Left cardiac atrium (tissue), 4 donors: ENCODE measurements at regions of chr6 and their contacts with region 1.

Region 1: GRCh38 chr6:169751242-169752073 is at the starts of genes DYNLT2 and ERMARD:
- DNase-seq: peak; percentile 95
- ATAC-seq: peak; percentile 98 to 99
- total RNA-seq, gene DYNLT2: 0.59 to 1.1 TPM
- total RNA-seq, gene ERMARD: 10.5 to 11.3 TPM

Region 2: GRCh38 chr6:168823397-168824212 is 927.9 kb before region 1 on chr6:
- intact Hi-C with region 1: no loop called
- DNase-seq: no peak
- ATAC-seq: peak in 1 of 2 donors; percentile 38

Region 3: DNA sequence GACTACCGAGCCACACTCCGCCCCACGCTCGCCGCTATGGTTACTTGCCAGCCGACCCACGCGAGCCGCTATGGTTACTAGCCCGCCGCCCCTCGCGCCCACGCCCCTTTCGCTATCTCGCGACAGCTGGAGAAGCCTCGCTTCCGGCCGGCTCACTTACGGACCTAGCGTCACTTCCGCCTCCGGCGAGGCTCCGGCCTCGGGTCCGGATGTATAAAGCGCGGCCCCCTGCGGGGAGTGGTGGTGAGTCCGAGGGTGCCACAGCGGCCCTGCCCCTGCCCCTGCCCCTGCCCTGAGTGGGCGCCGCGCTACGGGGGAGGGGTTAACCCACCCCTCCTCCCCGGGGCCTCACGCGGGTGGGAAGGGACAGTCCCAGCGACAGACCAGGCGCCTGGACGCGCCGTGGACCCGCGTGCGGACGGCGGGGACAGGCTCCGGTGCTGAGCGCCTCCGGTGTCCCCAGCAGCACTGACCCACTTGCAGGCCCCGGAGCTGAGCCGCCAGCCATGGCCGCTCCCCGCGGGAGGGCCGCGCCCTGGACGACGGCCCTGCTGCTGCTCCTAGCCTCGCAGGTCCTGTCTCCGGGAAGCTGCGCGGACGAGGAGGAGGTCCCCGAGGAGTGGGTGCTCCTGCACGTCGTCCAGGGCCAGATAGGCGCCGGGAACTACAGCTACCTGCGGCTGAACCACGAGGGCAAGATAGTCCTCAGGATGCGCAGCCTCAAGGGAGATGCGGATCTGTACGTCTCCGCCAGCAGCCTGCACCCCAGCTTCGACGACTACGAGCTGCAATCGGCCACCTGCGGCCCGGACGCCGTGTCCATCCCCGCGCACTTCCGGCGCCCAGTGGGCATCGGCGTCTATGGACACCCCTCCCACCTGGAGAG is 49.3 kb before region 1 on chr6 and contains the starts of genes C6orf120 and WDR27:
- intact Hi-C with region 1: loop called in 1 of 2 experiments (anchors 10 kb)
- DNase-seq: peak; percentile 99
- ATAC-seq: peak; percentile 97 to 98
- total RNA-seq, gene C6orf120: 17.8 to 18.6 TPM
- total RNA-seq, gene WDR27: 12.3 to 12.9 TPM

Region 4: GRCh38 chr6:169724494-169725124 is 26.8 kb before region 1 on chr6 and contains the start of gene PHF10:
- intact Hi-C with region 1: loop called in 1 of 2 experiments (anchors 2 kb)
- DNase-seq: peak; percentile 54
- ATAC-seq: peak; percentile 64 to 70
- total RNA-seq, gene PHF10: 49.7 to 59.0 TPM

Region 5: GRCh38 chr6:170554013-170554795 is 802.7 kb after region 1 on chr6 and contains the start of gene TBP:
- intact Hi-C with region 1: loop called in 1 of 2 experiments (anchors 2 kb)
- DNase-seq: peak; percentile 98
- ATAC-seq: peak; percentile 97 to 99
- total RNA-seq, gene TBP: 8.8 to 9.7 TPM